MCF 10A (cell line): ENCODE measurements at regions of chr3 and their contacts with region 1.

Region 1: DNA sequence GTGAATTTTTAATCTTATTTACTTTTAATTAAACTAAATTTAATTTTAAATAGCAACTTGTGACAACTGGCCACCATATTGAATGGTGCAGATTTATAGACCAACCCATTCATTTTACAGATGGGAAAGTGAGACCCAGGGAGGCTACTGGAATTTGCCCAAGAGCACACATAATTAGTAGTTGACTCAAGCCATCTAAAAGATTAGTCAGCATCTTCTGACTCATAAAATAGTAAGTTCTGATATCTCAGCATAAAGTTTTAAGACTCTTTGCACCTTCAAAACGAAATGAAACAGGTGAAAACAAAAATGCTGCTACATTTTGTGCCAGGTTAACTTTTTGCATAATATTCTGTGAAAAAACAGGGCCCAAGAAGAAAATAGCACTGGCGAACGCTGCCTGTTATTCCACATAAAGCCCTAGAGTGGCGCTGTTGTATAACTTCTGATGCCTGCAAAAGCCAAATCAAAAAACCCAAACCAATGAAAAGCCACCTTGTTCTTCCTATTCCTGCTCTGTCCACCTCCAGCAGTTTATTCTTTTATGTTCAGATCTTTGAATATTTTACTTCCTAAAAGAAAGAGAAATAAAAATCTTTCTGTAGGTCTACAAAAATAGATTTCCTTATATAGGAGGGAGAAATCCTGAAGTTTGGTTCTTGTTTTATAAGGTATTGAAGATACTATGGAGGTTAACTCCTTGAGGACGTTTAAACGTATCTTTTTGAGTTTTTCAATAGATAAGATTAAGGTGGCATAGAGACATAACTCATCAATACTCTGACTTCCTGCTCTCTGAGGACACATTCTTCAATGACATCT is 62.8 kb downstream of the OTOL1 start:
- DNase-seq: peak; percentile 65
- H3K4me3 Mint-ChIP-seq: peak overlapping the region; percentile 3
- H3K27ac Mint-ChIP-seq: no peak overlapping the region
- H3K4me1 Mint-ChIP-seq: peaks cover 4% of the 10 kb centered on the region
- H3K27me3 Mint-ChIP-seq: no peaks in the 10 kb centered on the region
- CTCF ChIP-seq: peak; percentile 81

Region 2: DNA sequence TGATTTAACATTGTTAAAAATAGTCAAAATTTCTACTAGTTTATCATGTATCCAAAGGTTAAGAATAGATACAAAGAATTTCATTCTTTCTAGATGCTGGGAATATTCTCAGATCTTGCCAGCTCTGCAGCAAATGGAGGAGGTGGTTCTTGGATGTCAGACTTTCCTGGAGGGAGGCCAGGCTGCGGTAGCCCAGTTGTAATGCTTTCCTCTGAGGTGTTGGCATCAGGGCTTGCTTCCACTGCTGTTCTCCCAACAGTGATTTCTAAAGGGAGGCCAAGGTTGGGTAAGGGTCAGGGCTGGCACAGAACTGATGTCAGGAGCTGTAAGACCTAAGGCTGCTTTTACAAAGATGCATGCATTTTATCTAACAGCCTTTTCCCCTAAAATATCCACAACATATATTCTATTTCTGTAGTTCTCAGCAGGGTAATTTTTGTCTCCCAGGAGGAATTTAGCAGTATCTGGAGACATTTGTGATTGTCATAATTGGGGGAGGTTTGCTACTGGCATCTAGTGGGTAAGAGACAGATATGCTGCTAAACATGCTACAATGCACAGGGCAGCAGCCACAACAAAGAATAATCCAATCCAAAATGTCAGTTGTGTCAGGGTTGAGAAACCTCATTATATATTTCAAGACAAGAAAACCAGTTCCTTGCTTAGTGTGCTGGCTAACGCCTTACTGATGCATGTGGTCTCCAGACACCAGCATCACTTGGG is 146.1 kb before region 1 on chr3:
- CTCF ChIA-PET with region 1: no interaction called
- POLR2A ChIA-PET with region 1: no interaction called
- intact Hi-C with region 1: no loop called
- DNase-seq: peak; percentile 90
- H3K4me3 Mint-ChIP-seq: no peak overlapping the region
- H3K27ac Mint-ChIP-seq: no peak overlapping the region
- H3K4me1 Mint-ChIP-seq: peaks cover 31% of the 10 kb centered on the region
- H3K27me3 Mint-ChIP-seq: no peaks in the 10 kb centered on the region
- CTCF ChIP-seq: no peak

Region 3: DNA sequence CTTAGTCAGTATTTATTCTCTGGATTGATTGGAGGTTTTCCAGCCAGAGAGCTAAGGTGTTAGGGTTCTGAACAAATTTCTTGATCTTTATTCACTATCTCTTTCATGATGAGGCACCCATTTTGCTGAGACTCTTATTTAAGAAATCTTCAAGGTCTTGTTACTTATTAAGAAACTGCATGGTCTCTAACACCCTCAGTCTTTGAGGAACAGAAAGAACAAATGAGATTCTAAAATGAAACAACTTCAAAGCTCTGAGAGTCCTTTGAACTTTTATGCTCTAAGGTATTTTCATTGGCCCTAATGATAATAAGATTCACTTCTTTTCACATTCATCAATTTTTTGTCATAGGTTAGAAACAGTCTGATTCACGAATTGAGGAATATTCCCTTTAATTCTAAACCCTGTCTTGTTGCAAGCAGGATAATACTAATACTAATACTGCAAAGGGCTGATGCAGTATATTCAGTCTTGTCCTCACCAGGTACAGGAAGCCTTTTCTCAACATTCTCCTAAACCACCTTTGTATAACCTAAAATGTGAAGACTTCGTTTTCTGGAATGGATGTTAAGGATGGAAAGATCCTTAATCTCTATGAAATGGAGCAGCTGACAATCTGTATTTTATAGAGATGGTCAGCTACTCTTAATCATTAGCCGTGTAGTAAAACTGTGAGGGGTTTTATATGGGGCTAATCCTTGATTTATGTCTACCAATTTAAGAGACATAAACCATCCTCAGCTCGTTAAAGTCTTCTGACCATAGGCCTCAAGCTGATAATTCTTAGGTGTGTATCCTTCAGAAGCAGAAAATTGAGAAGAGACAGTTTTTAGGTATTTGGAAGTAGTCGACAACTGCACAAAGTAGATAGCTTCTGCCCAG is 135.5 kb after region 1 on chr3:
- CTCF ChIA-PET with region 1: no interaction called
- POLR2A ChIA-PET with region 1: no interaction called
- intact Hi-C with region 1: no loop called
- DNase-seq: no peak
- H3K4me3 Mint-ChIP-seq: no peak overlapping the region
- H3K27ac Mint-ChIP-seq: no peak overlapping the region
- H3K4me1 Mint-ChIP-seq: no peaks in the 10 kb centered on the region
- H3K27me3 Mint-ChIP-seq: no peaks in the 10 kb centered on the region
- CTCF ChIP-seq: no peak

Region 4: GRCh38 chr3:161781391-161781790 is 222.0 kb after region 1 on chr3:
- CTCF ChIA-PET with region 1: no interaction called
- POLR2A ChIA-PET with region 1: no interaction called
- intact Hi-C with region 1: loop called (anchors 10 kb)
- DNase-seq: no peak
- H3K4me3 Mint-ChIP-seq: peak overlapping the region; percentile 13
- H3K27ac Mint-ChIP-seq: peak overlapping the region; percentile 43
- H3K4me1 Mint-ChIP-seq: no peaks in the 10 kb centered on the region
- H3K27me3 Mint-ChIP-seq: no peaks in the 10 kb centered on the region
- CTCF ChIP-seq: no peak

Region 5: DNA sequence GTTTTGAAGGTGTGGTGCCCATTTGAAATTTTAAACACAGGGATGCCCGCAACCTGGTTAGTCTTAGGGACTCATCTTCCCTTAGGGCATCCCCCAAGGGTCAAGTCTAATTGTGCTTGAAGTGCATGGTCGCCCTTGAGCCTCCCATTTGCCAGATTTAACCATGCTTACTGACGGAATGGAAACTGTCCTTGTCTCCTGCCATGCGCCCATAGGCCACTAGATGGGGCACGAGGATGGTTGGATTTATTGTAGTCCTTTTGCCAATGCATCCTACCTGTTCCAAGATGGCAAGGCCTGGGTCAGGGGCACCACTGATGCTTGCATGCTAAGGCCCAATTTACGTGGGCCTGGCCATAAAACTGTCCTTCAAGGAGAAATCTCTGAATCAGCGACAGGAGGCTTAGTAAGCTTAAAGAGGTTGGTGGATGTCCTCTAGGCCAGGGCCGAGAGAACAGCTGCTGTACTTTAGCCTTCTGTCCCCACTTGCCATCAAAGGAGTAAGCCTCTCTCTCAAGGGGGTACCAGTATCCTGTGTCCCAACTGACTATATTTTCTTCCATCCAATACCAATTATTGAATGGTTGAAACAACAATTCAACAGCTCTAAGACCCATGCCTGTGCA is 292.7 kb after region 1 on chr3:
- CTCF ChIA-PET with region 1: no interaction called
- POLR2A ChIA-PET with region 1: no interaction called
- intact Hi-C with region 1: loop called (anchors 1 kb)
- DNase-seq: peak; percentile 73
- H3K4me3 Mint-ChIP-seq: no peak overlapping the region
- H3K27ac Mint-ChIP-seq: no peak overlapping the region
- H3K4me1 Mint-ChIP-seq: no peaks in the 10 kb centered on the region
- H3K27me3 Mint-ChIP-seq: no peaks in the 10 kb centered on the region
- CTCF ChIP-seq: peak; percentile 91

Region 6: GRCh38 chr3:162285259-162285658 is 725.9 kb after region 1 on chr3:
- CTCF ChIA-PET with region 1: no interaction called
- POLR2A ChIA-PET with region 1: no interaction called
- intact Hi-C with region 1: loop called (anchors 5 kb)
- DNase-seq: no peak
- H3K4me3 Mint-ChIP-seq: no peak overlapping the region
- H3K27ac Mint-ChIP-seq: peak overlapping the region; percentile 13
- H3K4me1 Mint-ChIP-seq: peaks cover 9% of the 10 kb centered on the region
- H3K27me3 Mint-ChIP-seq: no peaks in the 10 kb centered on the region
- CTCF ChIP-seq: no peak

Region 7: DNA sequence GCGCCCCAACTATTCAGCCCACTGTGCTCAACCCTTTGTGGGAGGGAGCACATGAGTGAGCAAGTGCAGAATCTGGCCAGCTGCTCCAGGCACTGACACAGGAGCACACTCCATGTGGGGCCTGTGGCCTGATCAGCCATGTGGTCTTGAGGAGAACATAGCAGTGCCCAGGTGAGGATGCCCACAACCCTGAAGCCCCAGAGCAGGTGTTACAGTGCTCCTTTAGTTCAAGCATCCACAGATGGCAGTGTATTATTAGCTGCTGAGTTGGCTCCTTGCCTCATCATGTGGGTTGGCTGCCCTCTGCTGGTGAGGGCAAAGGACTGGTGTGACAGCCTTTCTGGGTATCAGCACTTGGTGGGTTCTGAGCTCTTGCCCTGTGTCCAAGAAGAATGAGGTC is 1930.7 kb after region 1 on chr3:
- CTCF ChIA-PET with region 1: interaction called, 3 read pairs
- POLR2A ChIA-PET with region 1: no interaction called
- intact Hi-C with region 1: loop called (anchors 1 kb)
- DNase-seq: peak; percentile 76
- H3K4me3 Mint-ChIP-seq: no peak overlapping the region
- H3K27ac Mint-ChIP-seq: no peak overlapping the region
- H3K4me1 Mint-ChIP-seq: no peaks in the 10 kb centered on the region
- H3K27me3 Mint-ChIP-seq: no peaks in the 10 kb centered on the region
- CTCF ChIP-seq: peak; percentile 72